ENCODE measurements at regions of chr3 and their contacts with region 1.

Region 1: GRCh38 chr3:28544236-28544635 is 195.6 kb upstream of the AZI2 start:
- DNase-seq: peak in 1 of 2 donors; percentile 52
- ATAC-seq: no peak
- H3K4me3 ChIP-seq: no peak overlapping the region
- H3K27ac ChIP-seq: no peak overlapping the region
- H3K4me1 ChIP-seq: peaks cover 0 to 2% of the 10 kb centered on the region in 2 donors
- H3K27me3 ChIP-seq: no peaks in the 10 kb centered on the region

Region 2: DNA sequence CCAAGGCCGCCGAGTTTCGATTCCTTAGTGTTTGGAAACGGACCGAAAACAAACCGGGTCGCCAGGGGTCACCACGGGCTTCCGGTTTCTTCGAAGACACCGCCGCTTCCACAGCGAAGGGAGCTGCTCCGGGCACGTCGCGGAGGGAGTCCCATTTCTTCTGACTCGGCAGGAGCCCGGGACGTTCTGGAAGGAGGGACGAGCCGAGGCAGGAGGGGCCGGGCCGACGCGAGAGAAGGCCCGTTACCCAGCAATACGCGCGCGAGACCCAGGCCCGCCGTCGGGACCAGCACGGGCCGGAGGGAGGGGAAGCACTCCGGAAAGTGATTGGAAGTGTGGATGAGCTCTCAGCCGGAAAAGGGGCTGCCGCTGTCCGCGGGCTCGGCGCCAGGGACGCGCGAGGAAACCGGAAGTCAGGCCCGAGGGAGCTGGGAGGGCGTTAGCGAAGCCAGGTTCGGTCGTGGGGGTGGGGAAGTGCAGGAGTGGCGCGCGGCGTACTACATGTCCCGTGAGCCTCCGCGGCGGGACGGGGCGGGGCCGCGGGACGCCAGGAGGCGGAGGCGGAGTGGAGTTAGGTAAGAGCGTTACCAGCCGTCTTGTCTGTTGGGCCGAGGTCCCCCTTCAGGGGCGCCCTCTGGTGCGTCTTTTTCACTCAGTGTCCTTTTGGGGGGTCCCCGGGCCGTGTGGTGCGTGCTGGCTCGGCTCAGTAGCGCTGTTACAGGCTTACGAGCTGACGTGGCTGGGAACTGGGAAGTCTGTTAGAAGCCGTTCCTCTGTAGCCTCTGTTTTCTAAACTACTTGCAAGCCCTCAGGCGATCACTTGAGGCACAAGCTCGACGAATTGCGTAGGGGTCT is 195.4 kb before region 1 on chr3 and contains the starts of genes AZI2 and ZCWPW2:
- intact Hi-C with region 1: loop called in 1 of 2 experiments (anchors 10 kb)
- DNase-seq: peak; percentile 98
- ATAC-seq: peak; percentile 99
- H3K4me3 ChIP-seq: peak within 1 kb of the TSS; percentile 73 to 77
- H3K27ac ChIP-seq: peak within 1 kb of the TSS; percentile 88 to 97
- H3K4me1 ChIP-seq: peaks cover 0 to 2% of the 10 kb centered on the region in 2 donors
- H3K27me3 ChIP-seq: no peaks in the 10 kb centered on the region
- total RNA-seq, gene AZI2: 73.1 to 85.2 TPM
- total RNA-seq, gene ZCWPW2: 1.1 to 1.6 TPM

Measured in aorta (tissue), 5 donors.